Heart right ventricle (tissue), 16 donors: ENCODE measurements at regions of chr4 and their contacts with region 1.

Region 1: GRCh38 chr4:123649645-123650391 is 253.2 kb downstream of the SPRY1 start:
- DNase-seq: peak in 1 of 2 donors; percentile 42
- ATAC-seq: peak; percentile 45 to 86 (median 71)
- H3K4me3 ChIP-seq: peak overlapping the region in 4 of 10 donors; percentile 15 to 30 (median 24)
- H3K27ac ChIP-seq: peak overlapping the region; percentile 28 to 80 (median 65)
- H3K4me1 ChIP-seq: peaks cover 0 to 37% (median 20%) of the 10 kb centered on the region in 9 donors
- H3K27me3 ChIP-seq: no peaks in the 10 kb centered on the region
- CTCF ChIP-seq: no peak

Region 2: GRCh38 chr4:123127218-123127617 is 522.6 kb before region 1 on chr4:
- intact Hi-C with region 1: loop called in 1 of 10 experiments (anchors 10 kb)
- DNase-seq: no peak
- ATAC-seq: peak in 3 of 8 donors; percentile 46 to 55 (median 49)
- H3K4me3 ChIP-seq: no peak overlapping the region
- H3K27ac ChIP-seq: peak overlapping the region in 4 of 10 donors; percentile 28 to 36 (median 33)
- H3K4me1 ChIP-seq: peaks cover 0 to 25% (median 4%) of the 10 kb centered on the region in 9 donors
- H3K27me3 ChIP-seq: no peaks in the 10 kb centered on the region
- CTCF ChIP-seq: peak in 8 of 9 donors; percentile 31 to 69 (median 50)

Region 3: DNA sequence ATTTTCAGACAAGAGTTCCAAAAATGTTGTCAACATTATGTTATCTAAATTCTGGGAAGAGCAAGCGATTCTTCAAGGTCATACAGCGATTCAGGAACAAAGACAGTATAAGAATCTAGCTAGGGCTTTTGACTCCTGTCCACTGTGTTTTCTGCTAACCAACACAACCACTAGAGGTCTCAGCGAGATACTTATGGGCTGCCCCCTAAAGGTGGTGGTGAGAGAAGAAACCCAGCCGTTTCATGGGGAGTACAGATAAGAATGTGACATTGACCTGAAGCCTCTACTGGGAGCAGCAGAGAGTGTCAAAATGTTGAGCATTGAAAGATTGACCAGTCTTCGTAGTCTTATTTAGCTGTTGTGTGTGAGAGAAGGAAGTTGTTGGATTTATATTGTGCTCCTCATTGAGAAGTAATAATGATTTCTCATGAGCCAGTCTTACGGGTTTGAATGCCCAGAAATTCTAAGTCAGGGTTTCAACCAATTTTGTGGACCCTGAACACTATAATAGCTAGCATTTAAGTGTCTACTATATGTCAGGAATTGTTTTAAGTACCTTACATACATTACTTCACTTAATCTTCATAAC is 85.0 kb before region 1 on chr4:
- intact Hi-C with region 1: loop called in 2 of 10 experiments (anchors 5 to 10 kb)
- DNase-seq: peak in 1 of 2 donors; percentile 69
- ATAC-seq: peak; percentile 68 to 94 (median 91)
- H3K4me3 ChIP-seq: no peak overlapping the region
- H3K27ac ChIP-seq: no peak overlapping the region
- H3K4me1 ChIP-seq: peaks cover 0 to 7% (median 4%) of the 10 kb centered on the region in 9 donors
- H3K27me3 ChIP-seq: no peaks in the 10 kb centered on the region
- CTCF ChIP-seq: peak; percentile 56 to 92 (median 73)

Region 4: DNA sequence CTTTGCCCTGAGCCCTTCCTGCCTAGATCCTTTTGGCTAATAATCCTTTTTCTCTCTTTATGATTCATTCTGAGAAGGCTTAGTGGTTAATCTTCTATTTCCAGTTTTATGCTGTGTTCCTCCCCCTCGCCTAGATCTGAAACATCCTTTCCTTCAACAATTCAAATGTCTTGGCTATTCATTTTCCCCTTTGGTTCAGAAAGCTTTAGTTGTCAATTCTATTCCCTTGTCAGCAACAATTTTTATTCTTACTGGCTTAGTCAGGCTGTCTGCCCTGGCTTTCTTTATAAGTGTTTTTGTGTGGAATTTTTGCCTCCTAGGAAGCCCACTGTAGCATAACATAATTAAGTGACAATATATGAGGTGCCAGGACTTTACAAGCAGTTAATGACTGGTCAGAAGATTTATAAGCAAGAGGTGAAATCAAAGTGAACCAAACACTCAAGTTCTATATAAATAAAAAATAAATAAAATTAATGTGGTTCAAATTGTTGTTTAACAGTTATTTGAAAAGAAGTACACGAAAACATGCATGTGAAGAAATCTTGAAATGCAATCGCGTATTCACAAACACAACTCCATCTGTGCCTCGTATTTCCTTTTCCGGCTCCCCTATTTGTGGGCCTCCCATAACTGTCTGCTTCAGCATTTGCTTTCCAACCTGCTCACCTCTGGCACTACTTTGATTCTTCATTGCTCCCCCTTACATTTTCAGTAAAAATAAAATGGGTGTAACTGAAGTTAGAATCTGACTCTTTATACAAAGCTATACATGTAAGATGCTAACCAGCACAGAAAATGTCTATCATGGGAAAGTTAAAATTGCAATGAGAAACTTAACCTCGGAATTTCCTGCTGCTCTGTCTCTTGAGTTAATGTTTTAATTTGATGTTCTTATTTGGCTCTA is 17.8 kb before region 1 on chr4:
- intact Hi-C with region 1: no loop called
- DNase-seq: no peak
- ATAC-seq: no peak
- H3K4me3 ChIP-seq: no peak overlapping the region
- H3K27ac ChIP-seq: no peak overlapping the region
- H3K4me1 ChIP-seq: peaks cover 0 to 10% (median 0%) of the 10 kb centered on the region in 9 donors
- H3K27me3 ChIP-seq: no peaks in the 10 kb centered on the region
- CTCF ChIP-seq: no peak

Region 5: GRCh38 chr4:124105212-124105611 is 455.4 kb after region 1 on chr4:
- intact Hi-C with region 1: loop called in 1 of 10 experiments (anchors 10 kb)
- DNase-seq: no peak
- ATAC-seq: peak in 3 of 8 donors; percentile 31 to 59 (median 51)
- H3K4me3 ChIP-seq: no peak overlapping the region
- H3K27ac ChIP-seq: no peak overlapping the region
- H3K4me1 ChIP-seq: no peaks in the 10 kb centered on the region
- H3K27me3 ChIP-seq: no peaks in the 10 kb centered on the region
- CTCF ChIP-seq: no peak

Region 6: DNA sequence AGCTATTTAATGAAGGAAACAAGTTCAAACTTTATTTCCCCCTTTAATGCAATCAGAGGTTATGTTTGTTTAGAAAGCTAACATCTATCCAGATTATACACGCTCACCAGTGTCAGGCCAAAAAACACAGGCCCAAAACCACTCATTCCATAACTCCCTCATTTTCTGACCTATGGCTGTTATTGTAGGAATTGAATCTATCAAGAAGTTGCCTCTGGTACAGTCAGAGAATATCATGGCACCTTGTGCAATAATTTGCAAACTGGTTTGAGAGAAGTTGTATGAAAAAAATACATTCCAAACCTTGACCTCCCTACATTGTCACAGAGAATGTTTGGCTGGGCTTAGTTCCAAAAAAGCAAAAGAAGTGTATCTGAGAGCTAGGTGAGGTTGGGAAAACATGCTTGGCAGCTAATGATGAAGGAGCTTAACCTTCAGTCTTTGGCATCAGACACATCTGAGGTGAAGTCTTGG is 471.7 kb after region 1 on chr4:
- intact Hi-C with region 1: loop called in 1 of 10 experiments (anchors 5 kb)
- DNase-seq: no peak
- ATAC-seq: no peak
- H3K4me3 ChIP-seq: no peak overlapping the region
- H3K27ac ChIP-seq: no peak overlapping the region
- H3K4me1 ChIP-seq: no peaks in the 10 kb centered on the region
- H3K27me3 ChIP-seq: no peaks in the 10 kb centered on the region
- CTCF ChIP-seq: no peak